Caco-2 (cell line): ENCODE measurements at regions of chr7 and their contacts with region 1.

Region 1: DNA sequence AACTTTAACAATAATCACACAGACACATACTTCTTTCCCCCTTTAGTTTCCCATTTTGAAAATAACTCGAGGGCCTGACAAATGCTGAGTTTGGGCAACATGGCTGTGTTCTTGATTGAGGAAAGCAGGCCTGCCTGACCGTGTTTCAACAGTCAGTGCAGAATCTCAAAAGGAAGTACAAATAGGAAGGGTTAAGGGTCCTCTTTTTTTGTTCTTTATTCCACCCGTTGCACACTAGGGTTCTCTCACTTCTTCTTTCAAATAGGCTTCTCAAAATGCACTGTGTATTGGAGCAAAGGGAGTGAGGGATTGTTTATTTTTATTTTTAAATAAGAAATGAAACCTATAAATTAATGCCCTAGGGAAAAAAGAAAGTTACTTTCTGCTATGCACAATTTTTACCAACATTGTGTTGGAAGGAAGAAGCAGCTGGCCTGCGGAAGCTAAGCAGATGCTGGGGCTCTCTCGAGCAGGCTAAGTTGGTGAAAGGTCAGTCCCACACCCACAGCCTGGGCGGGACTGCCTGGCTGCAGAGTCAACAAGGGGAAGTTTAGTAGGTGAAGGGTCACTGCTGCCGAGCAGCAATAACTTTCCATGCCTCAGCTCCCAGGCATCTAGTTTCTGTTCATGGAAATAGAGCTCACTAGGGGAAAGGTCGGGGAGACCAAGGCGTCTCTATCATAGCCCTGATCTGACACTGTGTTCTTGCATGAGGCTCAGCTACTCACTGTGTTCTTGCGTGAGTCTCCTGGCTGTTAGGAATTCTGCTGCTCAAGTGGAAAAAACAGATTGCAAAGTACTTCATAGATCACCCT is 12.2 kb upstream of the PDK4 start:
- DNase-seq: peak; percentile 90 to 95
- H3K4me3 ChIP-seq: no peak overlapping the region
- H3K4me3 Mint-ChIP-seq: peak overlapping the region; percentile 54
- H3K27ac Mint-ChIP-seq: peak overlapping the region; percentile 53
- H3K4me1 ChIP-seq: peaks cover 38% of the 10 kb centered on the region
- H3K4me1 Mint-ChIP-seq: peaks cover 8% of the 10 kb centered on the region
- H3K27me3 ChIP-seq: no peaks in the 10 kb centered on the region
- H3K27me3 Mint-ChIP-seq: no peaks in the 10 kb centered on the region
- CTCF ChIP-seq: no peak

Region 2: DNA sequence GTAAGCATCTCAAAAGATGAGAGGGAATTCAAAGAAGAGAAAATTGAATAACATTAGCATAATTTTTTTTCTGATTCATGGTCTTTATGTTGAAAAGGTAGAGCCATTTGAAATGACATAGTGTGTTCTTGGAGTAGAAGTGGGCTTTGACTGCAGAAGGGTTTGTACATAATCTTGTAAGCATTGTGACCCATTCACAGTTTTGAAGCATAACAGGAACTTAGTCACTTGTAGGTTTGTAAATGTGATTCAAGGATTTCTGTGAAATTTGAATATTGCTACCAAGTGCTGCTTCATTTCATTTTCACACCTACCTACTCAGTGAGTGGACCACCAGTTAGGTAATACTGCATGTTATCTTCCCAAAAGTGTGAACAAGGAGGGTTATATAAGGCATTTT is 352.9 kb before region 1 on chr7:
- CTCF ChIA-PET with region 1: no interaction called
- POLR2A ChIA-PET with region 1: no interaction called
- intact Hi-C with region 1: no loop called
- DNase-seq: no peak
- H3K4me3 ChIP-seq: no peak overlapping the region
- H3K4me3 Mint-ChIP-seq: no peak overlapping the region
- H3K27ac Mint-ChIP-seq: no peak overlapping the region
- H3K4me1 ChIP-seq: no peaks in the 10 kb centered on the region
- H3K4me1 Mint-ChIP-seq: no peaks in the 10 kb centered on the region
- H3K27me3 ChIP-seq: no peaks in the 10 kb centered on the region
- H3K27me3 Mint-ChIP-seq: no peaks in the 10 kb centered on the region
- CTCF ChIP-seq: no peak

Region 3: GRCh38 chr7:95527033-95527775 is 81.4 kb before region 1 on chr7:
- CTCF ChIA-PET with region 1: no interaction called
- POLR2A ChIA-PET with region 1: no interaction called
- intact Hi-C with region 1: loop called (anchors 5 kb)
- DNase-seq: peak; percentile 71 to 74
- H3K4me3 ChIP-seq: no peak overlapping the region
- H3K4me3 Mint-ChIP-seq: no peak overlapping the region
- H3K27ac Mint-ChIP-seq: no peak overlapping the region
- H3K4me1 ChIP-seq: no peaks in the 10 kb centered on the region
- H3K4me1 Mint-ChIP-seq: no peaks in the 10 kb centered on the region
- H3K27me3 ChIP-seq: no peaks in the 10 kb centered on the region
- H3K27me3 Mint-ChIP-seq: peaks cover 4% of the 10 kb centered on the region
- CTCF ChIP-seq: peak; percentile 84 to 93

Region 4: GRCh38 chr7:95545078-95545498 is 63.5 kb before region 1 on chr7:
- CTCF ChIA-PET with region 1: interaction called, 10 read pairs
- POLR2A ChIA-PET with region 1: no interaction called
- intact Hi-C with region 1: no loop called
- DNase-seq: peak in 1 of 2 experiments; percentile 43
- H3K4me3 ChIP-seq: no peak overlapping the region
- H3K4me3 Mint-ChIP-seq: peak overlapping the region; percentile 19
- H3K27ac Mint-ChIP-seq: no peak overlapping the region
- H3K4me1 ChIP-seq: no peaks in the 10 kb centered on the region
- H3K4me1 Mint-ChIP-seq: peaks cover 7% of the 10 kb centered on the region
- H3K27me3 ChIP-seq: no peaks in the 10 kb centered on the region
- H3K27me3 Mint-ChIP-seq: peaks cover 2% of the 10 kb centered on the region
- CTCF ChIP-seq: peak; percentile 51 to 80

Region 5: GRCh38 chr7:95660023-95660434 is 51.5 kb after region 1 on chr7:
- CTCF ChIA-PET with region 1: no interaction called
- POLR2A ChIA-PET with region 1: no interaction called
- intact Hi-C with region 1: loop called (anchors 2 kb)
- DNase-seq: peak; percentile 30 to 52
- H3K4me3 ChIP-seq: no peak overlapping the region
- H3K4me3 Mint-ChIP-seq: no peak overlapping the region
- H3K27ac Mint-ChIP-seq: no peak overlapping the region
- H3K4me1 ChIP-seq: peaks cover 14% of the 10 kb centered on the region
- H3K4me1 Mint-ChIP-seq: peaks cover 9% of the 10 kb centered on the region
- H3K27me3 ChIP-seq: no peaks in the 10 kb centered on the region
- H3K27me3 Mint-ChIP-seq: no peaks in the 10 kb centered on the region
- CTCF ChIP-seq: no peak